ENCODE measurements at regions of chr1 and their contacts with region 1.

Region 1: GRCh38 chr1:100459358-100460114 is 78.4 kb upstream of the GPR88 start:
- DNase-seq: peak; percentile 74
- H3K4me3 ChIP-seq: no peak overlapping the region
- H3K27ac ChIP-seq: no peak overlapping the region
- H3K4me1 ChIP-seq: peaks cover 8% of the 10 kb centered on the region
- CTCF ChIP-seq: peak; percentile 97

Region 2: GRCh38 chr1:99808391-99809115 is 651.0 kb before region 1 on chr1:
- CTCF ChIA-PET with region 1: interaction called, 6 read pairs
- POLR2A ChIA-PET with region 1: interaction called, 3 read pairs
- intact Hi-C with region 1: loop called (anchors 2 kb)
- DNase-seq: peak; percentile 84
- H3K4me3 ChIP-seq: no peak overlapping the region
- H3K27ac ChIP-seq: no peak overlapping the region
- H3K4me1 ChIP-seq: peaks cover 5% of the 10 kb centered on the region
- CTCF ChIP-seq: peak; percentile 87

Region 3: GRCh38 chr1:100277866-100278265 is 181.7 kb before region 1 on chr1:
- CTCF ChIA-PET with region 1: no interaction called
- POLR2A ChIA-PET with region 1: no interaction called
- intact Hi-C with region 1: loop called (anchors 10 kb)
- DNase-seq: peak; percentile 12
- H3K4me3 ChIP-seq: no peak overlapping the region
- H3K27ac ChIP-seq: no peak overlapping the region
- H3K4me1 ChIP-seq: no peaks in the 10 kb centered on the region
- CTCF ChIP-seq: peak; percentile 43

Region 4: GRCh38 chr1:100430325-100430813 is 29.2 kb before region 1 on chr1:
- CTCF ChIA-PET with region 1: no interaction called
- POLR2A ChIA-PET with region 1: no interaction called
- intact Hi-C with region 1: no loop called
- DNase-seq: no peak
- H3K4me3 ChIP-seq: no peak overlapping the region
- H3K27ac ChIP-seq: no peak overlapping the region
- H3K4me1 ChIP-seq: no peaks in the 10 kb centered on the region
- CTCF ChIP-seq: no peak

Region 5: GRCh38 chr1:100538913-100539835 is 79.6 kb after region 1 on chr1:
- CTCF ChIA-PET with region 1: no interaction called
- POLR2A ChIA-PET with region 1: no interaction called
- intact Hi-C with region 1: loop called (anchors 5 kb)
- DNase-seq: no peak
- H3K4me3 ChIP-seq: no peak overlapping the region
- H3K27ac ChIP-seq: no peak overlapping the region
- H3K4me1 ChIP-seq: peaks cover 15% of the 10 kb centered on the region
- CTCF ChIP-seq: no peak

Region 6: DNA sequence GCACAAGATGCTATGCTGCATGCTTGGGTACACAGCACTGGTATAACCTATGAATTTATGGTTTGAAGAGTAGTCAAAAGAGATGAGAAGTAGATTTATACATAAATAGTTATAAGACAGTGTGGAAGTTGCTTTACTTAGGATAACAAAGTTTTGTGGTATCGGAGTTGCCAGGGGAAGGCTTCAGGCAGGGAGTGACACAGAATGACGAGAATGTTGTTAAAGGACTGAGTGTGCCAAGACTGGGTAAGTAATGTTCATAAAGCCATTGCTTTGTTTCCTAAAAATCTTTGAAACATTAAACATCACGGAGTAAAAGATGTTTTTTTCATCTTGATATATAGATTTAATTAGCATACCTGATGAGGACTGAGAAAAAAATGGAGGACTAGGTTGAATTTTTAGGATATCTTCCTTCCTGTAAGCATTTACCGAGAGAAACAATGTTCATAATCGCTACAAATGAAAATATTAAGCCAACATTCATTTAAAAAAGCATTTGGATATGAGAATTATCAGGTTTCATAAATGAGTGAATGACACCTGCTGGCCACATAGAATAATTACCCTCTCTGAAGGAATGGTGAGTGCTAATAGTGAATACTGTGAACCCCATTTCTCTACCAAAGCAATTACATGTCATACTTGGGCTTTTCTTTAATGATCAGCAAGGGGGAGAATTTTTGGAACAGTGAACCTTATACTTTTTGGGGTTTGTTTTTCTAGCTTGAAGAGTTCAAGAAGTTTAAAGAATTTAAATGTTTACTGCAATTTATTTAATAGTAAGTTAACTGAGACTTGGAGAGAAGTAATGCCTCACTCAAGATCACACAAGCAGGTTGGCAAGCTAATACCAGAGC is 406.7 kb after region 1 on chr1:
- CTCF ChIA-PET with region 1: interaction called, 5 read pairs
- POLR2A ChIA-PET with region 1: interaction called, 3 read pairs
- intact Hi-C with region 1: loop called (anchors 1 kb)
- DNase-seq: peak; percentile 42
- H3K4me3 ChIP-seq: no peak overlapping the region
- H3K27ac ChIP-seq: no peak overlapping the region
- H3K4me1 ChIP-seq: no peaks in the 10 kb centered on the region
- CTCF ChIP-seq: peak; percentile 83

Measured in OCI-LY7 (cell line).